Activated naive CD4-positive, alpha-beta T cell treated with anti-CD3 and anti-CD28 coated beads for 36 hours (primary cell): ENCODE measurements at regions of chr6 and their contacts with region 1.

Region 1: DNA sequence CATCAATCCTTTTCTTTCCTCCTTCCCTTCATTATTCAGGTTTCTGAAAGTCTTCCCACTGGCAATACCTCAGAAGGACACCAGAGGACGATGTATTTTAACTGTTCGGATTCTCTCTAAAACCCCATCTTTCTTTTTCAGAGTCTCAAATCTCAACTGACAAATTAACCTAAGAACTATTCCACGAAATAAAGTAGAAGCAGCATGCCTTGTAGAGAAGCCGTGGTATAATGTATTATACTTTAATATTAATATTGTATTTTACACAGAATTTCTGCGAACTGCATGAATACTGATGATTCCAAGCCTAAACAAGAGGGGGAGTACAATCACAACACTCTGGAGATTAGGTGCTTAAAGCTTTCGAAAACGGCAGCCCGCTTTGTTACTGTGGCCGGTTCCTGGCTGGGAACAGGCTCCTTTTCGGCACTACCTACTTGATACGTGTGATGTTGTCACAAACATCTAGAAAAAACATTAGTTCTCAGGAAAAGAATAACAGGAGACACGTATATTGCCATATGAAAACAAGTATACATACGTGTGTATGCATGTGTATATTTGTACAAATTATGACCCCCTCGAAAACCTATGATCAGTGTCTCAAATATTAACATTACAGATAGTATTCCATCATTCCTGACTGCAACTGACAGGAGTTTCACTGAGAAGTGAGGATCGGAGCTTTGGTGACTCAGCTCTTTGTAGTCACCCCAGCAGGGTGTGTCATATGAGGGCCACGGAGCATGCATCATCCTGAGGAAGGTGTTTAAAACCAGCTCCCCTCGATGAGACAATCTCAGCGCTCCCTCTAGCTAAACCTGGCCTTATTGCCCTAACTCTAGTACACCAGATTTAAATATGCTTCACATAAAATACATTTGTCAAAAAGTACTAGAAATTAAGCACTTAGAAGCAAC is 319.7 kb upstream of the TCF21 start:
- DNase-seq: peak; percentile 51
- H3K4me3 Mint-ChIP-seq: no peak overlapping the region
- H3K27ac Mint-ChIP-seq: no peak overlapping the region
- H3K4me1 Mint-ChIP-seq: peaks cover 8% of the 10 kb centered on the region
- H3K27me3 Mint-ChIP-seq: peaks cover 36% of the 10 kb centered on the region

Region 2: DNA sequence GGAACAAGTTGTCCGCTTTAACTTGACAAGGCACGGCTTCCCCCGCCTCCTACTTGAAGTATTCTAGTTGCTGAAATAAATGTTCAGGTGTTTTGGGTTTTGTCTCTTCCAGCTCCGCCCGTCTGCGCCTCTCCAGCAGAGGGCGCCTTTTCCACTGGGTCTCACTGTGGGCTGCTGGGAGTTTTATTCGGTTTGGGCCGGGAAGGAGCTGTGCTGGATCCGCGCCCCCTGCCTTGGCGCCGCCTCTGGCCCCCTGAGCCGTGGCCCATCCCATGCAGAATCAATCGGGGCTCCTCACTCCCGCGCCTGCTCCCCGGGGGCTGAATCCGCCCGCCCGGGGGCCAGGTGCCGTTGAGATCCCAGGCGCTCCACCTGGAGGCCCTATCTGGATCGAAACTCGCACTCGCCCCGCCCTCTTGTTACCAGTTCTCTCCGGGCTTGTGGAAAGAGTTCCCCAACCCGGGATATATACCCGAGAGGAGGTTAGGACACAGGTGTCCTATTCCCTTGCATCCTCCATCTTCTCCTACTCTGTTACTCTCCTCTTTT is 268.6 kb after region 1 on chr6:
- CTCF ChIA-PET with region 1: no interaction called
- intact Hi-C with region 1: loop called (anchors 10 kb)
- DNase-seq: peak; percentile 75
- H3K4me3 Mint-ChIP-seq: peak overlapping the region; percentile 55
- H3K27ac Mint-ChIP-seq: no peak overlapping the region
- H3K4me1 Mint-ChIP-seq: peaks cover 5% of the 10 kb centered on the region
- H3K27me3 Mint-ChIP-seq: peaks cover 20% of the 10 kb centered on the region